ENCODE measurements at regions of chr5 and their contacts with region 1.

Region 1: DNA sequence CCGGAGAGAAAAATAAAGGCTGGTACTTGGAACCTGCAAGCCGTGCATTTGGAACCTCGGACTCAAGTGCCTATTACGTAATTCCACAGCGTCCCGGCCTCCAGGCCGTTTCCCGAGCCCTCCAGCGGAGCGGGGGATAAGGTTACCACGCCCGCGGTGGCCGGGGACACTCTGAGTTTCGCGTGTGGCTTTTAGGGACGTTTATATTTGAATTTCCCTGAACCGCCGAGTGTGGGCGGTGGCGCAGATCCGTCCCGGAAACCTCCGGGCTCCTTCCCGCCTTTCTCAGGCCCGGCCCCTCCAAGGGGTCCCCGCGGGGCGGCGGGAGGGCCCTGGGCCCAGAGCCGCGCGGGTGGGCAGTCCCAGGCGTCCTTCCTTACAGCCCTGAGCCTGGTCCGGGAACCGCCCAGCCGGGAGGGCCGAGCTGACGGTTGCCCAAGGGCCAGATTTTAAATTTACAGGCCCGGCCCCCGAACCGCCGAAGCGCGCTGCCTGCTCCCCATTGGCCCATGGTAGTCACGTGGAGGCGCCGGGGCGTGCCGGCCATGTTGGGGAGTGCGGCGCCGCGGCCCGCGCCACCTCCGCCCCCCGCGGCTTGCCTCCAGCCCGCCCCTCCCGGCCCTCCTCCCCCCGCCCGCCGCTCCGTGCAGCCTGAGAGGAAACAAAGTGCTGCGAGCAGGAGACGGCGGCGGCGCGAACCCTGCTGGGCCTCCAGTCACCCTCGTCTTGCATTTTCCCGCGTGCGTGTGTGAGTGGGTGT is at the start of gene LMNB1:
- DNase-seq: peak; percentile 94
- H3K4me3 Mint-ChIP-seq: peak within 1 kb of the TSS; percentile 94
- H3K27ac Mint-ChIP-seq: peak within 1 kb of the TSS; percentile 97
- H3K4me1 Mint-ChIP-seq: peaks cover 24% of the 10 kb centered on the region
- H3K27me3 Mint-ChIP-seq: no peaks in the 10 kb centered on the region
- total RNA-seq, gene LMNB1: 200 and 209 TPM in 2 replicates

Region 2: DNA sequence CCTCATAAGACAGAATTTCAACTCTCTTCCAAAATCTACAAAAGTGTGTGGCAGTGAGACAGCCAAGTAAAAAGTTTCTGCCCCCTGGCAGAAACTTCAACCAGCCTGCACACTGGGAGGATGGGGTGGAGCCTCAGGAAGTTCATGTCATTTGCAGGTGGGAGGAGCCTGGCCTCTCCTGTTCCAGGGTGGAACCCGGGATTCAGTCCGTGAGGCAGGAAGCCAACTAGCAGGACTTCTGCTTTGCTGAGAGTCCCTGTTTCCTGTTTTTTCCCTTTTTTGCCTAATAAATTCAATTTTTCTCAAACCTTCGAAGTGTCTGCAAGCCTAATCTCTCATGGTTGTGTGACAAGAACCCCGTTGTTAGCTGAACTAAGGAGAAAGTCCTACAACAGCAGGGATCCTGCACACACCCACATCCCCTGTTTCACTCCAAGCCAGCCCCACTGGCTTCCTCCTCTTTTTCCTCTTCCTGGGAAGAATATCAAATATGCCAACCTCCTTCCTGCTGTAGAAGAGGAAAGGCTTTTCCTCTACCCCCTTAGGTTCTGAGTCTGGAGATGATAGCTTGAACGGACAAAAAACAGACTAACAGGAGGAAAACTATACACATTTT is 250.9 kb before region 1 on chr5:
- intact Hi-C with region 1: no loop called
- DNase-seq: no peak
- H3K4me3 Mint-ChIP-seq: no peak overlapping the region
- H3K27ac Mint-ChIP-seq: no peak overlapping the region
- H3K4me1 Mint-ChIP-seq: no peaks in the 10 kb centered on the region
- H3K27me3 Mint-ChIP-seq: peaks cover 6% of the 10 kb centered on the region

Region 3: DNA sequence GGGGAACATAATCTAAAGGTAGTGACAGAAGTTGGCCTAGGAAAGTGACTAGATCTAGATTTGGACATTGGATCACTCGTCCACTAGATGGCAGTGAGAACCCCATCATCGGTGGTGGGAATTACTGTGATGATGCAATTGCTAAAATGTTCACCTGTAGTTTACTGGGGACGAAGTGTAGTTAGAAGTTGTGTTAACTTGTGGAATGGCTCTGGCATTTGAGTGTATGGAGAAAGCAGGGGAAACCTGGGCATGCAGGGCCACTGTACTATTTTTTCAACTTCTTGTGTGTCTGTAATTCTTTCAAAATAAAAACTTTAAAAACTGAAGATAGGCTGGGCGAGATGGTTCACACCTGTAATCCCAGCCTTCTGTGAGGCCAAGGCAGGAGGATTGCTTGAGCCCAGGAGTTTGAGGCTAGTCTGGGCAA is 100.5 kb before region 1 on chr5:
- intact Hi-C with region 1: loop called (anchors 1 kb)
- DNase-seq: peak; percentile 52
- H3K4me3 Mint-ChIP-seq: no peak overlapping the region
- H3K27ac Mint-ChIP-seq: peak overlapping the region; percentile 8
- H3K4me1 Mint-ChIP-seq: peaks cover 6% of the 10 kb centered on the region
- H3K27me3 Mint-ChIP-seq: peaks cover 3% of the 10 kb centered on the region

Region 4: GRCh38 chr5:126757713-126758357 is 18.8 kb before region 1 on chr5:
- intact Hi-C with region 1: loop called (anchors 1 kb)
- DNase-seq: no peak
- H3K4me3 Mint-ChIP-seq: peak overlapping the region; percentile 58
- H3K27ac Mint-ChIP-seq: peak overlapping the region; percentile 88
- H3K4me1 Mint-ChIP-seq: peaks cover 50% of the 10 kb centered on the region
- H3K27me3 Mint-ChIP-seq: no peaks in the 10 kb centered on the region

Region 5: DNA sequence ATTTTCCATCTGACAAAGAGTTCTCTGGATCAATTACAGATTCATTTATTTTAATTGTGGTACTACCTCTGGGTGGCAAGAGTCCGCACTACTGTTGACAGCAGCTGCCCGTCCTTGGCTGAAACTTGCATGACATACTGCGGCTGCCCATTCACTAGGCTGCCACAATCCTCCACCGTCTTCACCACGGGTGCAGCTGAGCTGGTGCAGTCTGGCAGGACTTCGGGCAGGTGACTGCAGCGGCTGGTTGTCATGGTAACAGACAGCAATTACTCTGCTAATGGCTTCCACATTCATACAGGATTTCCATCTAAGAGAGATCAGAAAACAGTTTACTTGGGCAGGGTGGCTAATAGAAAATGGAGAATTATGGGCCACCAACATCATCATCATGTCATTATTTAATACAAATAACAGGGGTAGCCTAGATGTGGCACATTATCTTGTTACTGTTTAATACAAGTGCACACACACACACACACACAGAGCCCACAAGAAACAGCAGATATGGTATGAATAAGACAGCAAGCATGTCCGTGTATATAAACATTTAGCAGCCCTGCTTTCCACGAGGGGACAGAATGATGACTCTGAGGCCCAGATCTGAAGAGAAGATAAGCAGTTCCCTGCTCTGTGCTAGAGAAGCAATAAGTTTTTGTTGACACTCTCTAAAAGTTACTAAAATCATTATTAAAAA is 141.4 kb after region 1 on chr5:
- intact Hi-C with region 1: no loop called
- DNase-seq: no peak
- H3K4me3 Mint-ChIP-seq: no peak overlapping the region
- H3K27ac Mint-ChIP-seq: no peak overlapping the region
- H3K4me1 Mint-ChIP-seq: no peaks in the 10 kb centered on the region
- H3K27me3 Mint-ChIP-seq: no peaks in the 10 kb centered on the region

Region 6: GRCh38 chr5:126988021-126988569 is 211.4 kb after region 1 on chr5:
- intact Hi-C with region 1: loop called (anchors 1 kb)
- DNase-seq: peak; percentile 31
- H3K4me3 Mint-ChIP-seq: peak overlapping the region; percentile 28
- H3K27ac Mint-ChIP-seq: peak overlapping the region; percentile 86
- H3K4me1 Mint-ChIP-seq: peaks cover 28% of the 10 kb centered on the region
- H3K27me3 Mint-ChIP-seq: no peaks in the 10 kb centered on the region

Region 7: DNA sequence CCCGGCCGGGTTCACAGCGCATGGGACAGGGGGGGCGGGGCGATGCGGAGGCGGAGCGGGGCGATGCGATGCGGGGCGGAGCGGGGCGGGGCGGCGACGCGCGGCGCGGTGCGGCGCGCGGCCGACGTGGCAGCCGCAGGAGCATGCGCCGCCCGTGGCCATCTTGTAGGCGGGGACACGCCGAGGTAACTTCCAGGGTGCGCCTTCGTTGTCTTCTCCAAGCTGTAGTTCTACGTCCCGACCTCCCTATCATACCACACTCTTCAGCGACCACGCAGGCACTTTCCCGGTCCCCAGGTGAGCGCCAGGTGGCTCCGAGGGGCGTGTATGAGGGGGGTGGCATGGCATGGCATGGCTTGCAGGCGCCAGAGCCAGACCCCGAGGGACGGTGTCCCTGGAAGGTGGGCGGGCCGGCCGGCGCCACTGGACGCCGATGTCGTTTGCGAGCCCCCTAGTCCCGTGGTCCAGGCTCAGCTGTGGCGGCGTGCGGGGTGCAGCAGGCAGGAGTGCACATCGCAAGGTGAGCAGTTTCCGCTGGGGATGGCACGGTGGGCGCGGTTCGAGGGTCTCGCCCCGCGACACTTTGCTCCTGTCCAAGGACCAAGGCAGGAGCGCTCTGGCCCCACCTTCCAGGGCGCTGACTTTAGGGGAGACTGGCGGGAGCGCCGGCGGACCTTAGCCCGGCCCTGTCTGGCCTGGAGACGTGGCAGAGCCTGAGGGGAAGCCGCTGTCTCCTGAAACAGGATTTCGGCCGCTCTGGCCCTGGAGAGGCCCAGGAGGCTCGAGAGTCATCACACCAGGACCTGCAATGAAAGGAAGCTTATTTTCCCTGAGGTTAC is 741.0 kb after region 1 on chr5 and contains the start of gene PRRC1:
- intact Hi-C with region 1: loop called (anchors 1 kb)
- DNase-seq: peak; percentile 73
- H3K4me3 Mint-ChIP-seq: peak within 1 kb of the TSS; percentile 84
- H3K27ac Mint-ChIP-seq: peak within 1 kb of the TSS; percentile 59
- H3K4me1 Mint-ChIP-seq: peaks cover 26% of the 10 kb centered on the region
- H3K27me3 Mint-ChIP-seq: peaks cover 7% of the 10 kb centered on the region
- total RNA-seq, gene PRRC1: 52.9 and 59.7 TPM in 2 replicates